ENCODE measurements at regions of chr4 and their contacts with region 1.

Region 1: GRCh38 chr4:83217721-83218522 is 66.7 kb downstream of the COQ2 start:
- DNase-seq: peak; percentile 76
- H3K4me3 Mint-ChIP-seq: peak overlapping the region; percentile 22
- H3K27ac Mint-ChIP-seq: peak overlapping the region; percentile 52
- H3K4me1 Mint-ChIP-seq: peaks cover 60% of the 10 kb centered on the region
- H3K27me3 Mint-ChIP-seq: peaks cover 5% of the 10 kb centered on the region

Region 2: GRCh38 chr4:82097504-82097903 is 1120.4 kb before region 1 on chr4:
- CTCF ChIA-PET with region 1: no interaction called
- POLR2A ChIA-PET with region 1: no interaction called
- intact Hi-C with region 1: no loop called
- DNase-seq: no peak
- H3K4me3 Mint-ChIP-seq: no peak overlapping the region
- H3K27ac Mint-ChIP-seq: no peak overlapping the region
- H3K4me1 Mint-ChIP-seq: no peaks in the 10 kb centered on the region
- H3K27me3 Mint-ChIP-seq: no peaks in the 10 kb centered on the region

Region 3: GRCh38 chr4:83012687-83013419 is 205.1 kb before region 1 on chr4:
- CTCF ChIA-PET with region 1: no interaction called
- POLR2A ChIA-PET with region 1: no interaction called
- intact Hi-C with region 1: loop called (anchors 2 kb)
- DNase-seq: peak; percentile 98
- H3K4me3 Mint-ChIP-seq: peak overlapping the region; percentile 92
- H3K27ac Mint-ChIP-seq: peak overlapping the region; percentile 92
- H3K4me1 Mint-ChIP-seq: peaks cover 36% of the 10 kb centered on the region
- H3K27me3 Mint-ChIP-seq: no peaks in the 10 kb centered on the region

Region 4: DNA sequence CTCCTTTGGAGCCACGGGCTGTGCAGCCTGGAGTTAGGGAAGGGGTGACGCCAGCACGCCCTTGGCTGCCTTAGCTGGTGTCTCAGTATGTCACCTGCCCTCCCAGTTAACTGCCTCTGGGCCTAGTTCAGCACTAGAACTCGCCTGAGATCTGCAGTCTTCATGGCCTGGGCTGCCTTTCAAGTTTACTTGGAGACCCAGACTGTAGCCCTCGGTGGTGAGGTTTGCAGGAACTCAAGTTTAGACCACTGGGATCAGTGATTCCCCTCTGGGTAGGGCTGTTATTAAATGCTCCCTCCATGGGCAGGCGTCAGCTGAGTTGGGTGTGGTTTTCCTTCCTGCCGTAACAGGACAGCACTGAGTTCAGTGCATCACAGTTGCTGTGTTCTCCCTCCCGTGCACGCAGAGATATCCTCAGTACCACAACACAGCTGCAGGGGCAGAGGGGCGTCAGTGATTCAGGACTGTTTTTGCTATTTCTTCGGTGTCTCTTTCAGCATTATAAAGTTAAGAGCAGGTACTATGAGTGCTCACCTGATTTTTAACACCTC is 133.9 kb before region 1 on chr4:
- CTCF ChIA-PET with region 1: no interaction called
- POLR2A ChIA-PET with region 1: no interaction called
- intact Hi-C with region 1: no loop called
- DNase-seq: peak; percentile 63
- H3K4me3 Mint-ChIP-seq: no peak overlapping the region
- H3K27ac Mint-ChIP-seq: peak overlapping the region; percentile 40
- H3K4me1 Mint-ChIP-seq: peaks cover 27% of the 10 kb centered on the region
- H3K27me3 Mint-ChIP-seq: no peaks in the 10 kb centered on the region

Region 5: GRCh38 chr4:83231620-83232076 is 13.7 kb after region 1 on chr4:
- CTCF ChIA-PET with region 1: interaction called, 10 read pairs
- POLR2A ChIA-PET with region 1: interaction called, 15 read pairs
- intact Hi-C with region 1: loop called (anchors 1 kb)
- DNase-seq: peak; percentile 51
- H3K4me3 Mint-ChIP-seq: no peak overlapping the region
- H3K27ac Mint-ChIP-seq: peak overlapping the region; percentile 43
- H3K4me1 Mint-ChIP-seq: peaks cover 43% of the 10 kb centered on the region
- H3K27me3 Mint-ChIP-seq: peaks cover 29% of the 10 kb centered on the region

Region 6: GRCh38 chr4:83252782-83253405 is 35.0 kb after region 1 on chr4:
- CTCF ChIA-PET with region 1: interaction called, 8 read pairs
- POLR2A ChIA-PET with region 1: no interaction called
- intact Hi-C with region 1: loop called (anchors 5 kb)
- DNase-seq: peak; percentile 78
- H3K4me3 Mint-ChIP-seq: no peak overlapping the region
- H3K27ac Mint-ChIP-seq: no peak overlapping the region
- H3K4me1 Mint-ChIP-seq: peaks cover 9% of the 10 kb centered on the region
- H3K27me3 Mint-ChIP-seq: no peaks in the 10 kb centered on the region

Region 7: GRCh38 chr4:83356899-83357661 is 139.2 kb after region 1 on chr4:
- CTCF ChIA-PET with region 1: no interaction called
- POLR2A ChIA-PET with region 1: interaction called, 3 read pairs
- intact Hi-C with region 1: loop called (anchors 2 kb)
- DNase-seq: peak; percentile 65
- H3K4me3 Mint-ChIP-seq: peak overlapping the region; percentile 41
- H3K27ac Mint-ChIP-seq: peak overlapping the region; percentile 86
- H3K4me1 Mint-ChIP-seq: peaks cover 17% of the 10 kb centered on the region
- H3K27me3 Mint-ChIP-seq: no peaks in the 10 kb centered on the region